ENCODE measurements at regions of chr11 and their contacts with region 1.

Region 1: GRCh38 chr11:72483412-72484186 is 49.3 kb upstream of the CLPB start:
- DNase-seq: peak in 1 of 2 donors; percentile 42
- ATAC-seq: peak in 1 of 3 donors; percentile 42
- H3K4me3 ChIP-seq: no peak overlapping the region
- H3K4me3 Mint-ChIP-seq: no peak overlapping the region
- H3K27ac ChIP-seq: no peak overlapping the region
- H3K27ac Mint-ChIP-seq: peak overlapping the region in 1 of 2 donors; percentile 67
- H3K4me1 ChIP-seq: peaks cover 18% of the 10 kb centered on the region
- H3K4me1 Mint-ChIP-seq: peaks cover 15 to 17% of the 10 kb centered on the region in 2 donors
- H3K27me3 ChIP-seq: no peaks in the 10 kb centered on the region
- H3K27me3 Mint-ChIP-seq: no peaks in the 10 kb centered on the region
- CTCF ChIP-seq: no peak

Region 2: GRCh38 chr11:72553706-72554105 is 70.1 kb after region 1 on chr11:
- intact Hi-C with region 1: loop called (anchors 1 kb)
- DNase-seq: peak in 1 of 2 donors; percentile 67
- ATAC-seq: peak in 2 of 3 donors; percentile 64 to 84
- H3K4me3 ChIP-seq: no peak overlapping the region
- H3K4me3 Mint-ChIP-seq: no peak overlapping the region
- H3K27ac ChIP-seq: no peak overlapping the region
- H3K27ac Mint-ChIP-seq: no peak overlapping the region
- H3K4me1 ChIP-seq: peaks cover 10% of the 10 kb centered on the region
- H3K4me1 Mint-ChIP-seq: peaks cover 15 to 21% of the 10 kb centered on the region in 2 donors
- H3K27me3 ChIP-seq: no peaks in the 10 kb centered on the region
- H3K27me3 Mint-ChIP-seq: peaks cover 4 to 13% of the 10 kb centered on the region in 2 donors
- CTCF ChIP-seq: peak; percentile 28

Region 3: DNA sequence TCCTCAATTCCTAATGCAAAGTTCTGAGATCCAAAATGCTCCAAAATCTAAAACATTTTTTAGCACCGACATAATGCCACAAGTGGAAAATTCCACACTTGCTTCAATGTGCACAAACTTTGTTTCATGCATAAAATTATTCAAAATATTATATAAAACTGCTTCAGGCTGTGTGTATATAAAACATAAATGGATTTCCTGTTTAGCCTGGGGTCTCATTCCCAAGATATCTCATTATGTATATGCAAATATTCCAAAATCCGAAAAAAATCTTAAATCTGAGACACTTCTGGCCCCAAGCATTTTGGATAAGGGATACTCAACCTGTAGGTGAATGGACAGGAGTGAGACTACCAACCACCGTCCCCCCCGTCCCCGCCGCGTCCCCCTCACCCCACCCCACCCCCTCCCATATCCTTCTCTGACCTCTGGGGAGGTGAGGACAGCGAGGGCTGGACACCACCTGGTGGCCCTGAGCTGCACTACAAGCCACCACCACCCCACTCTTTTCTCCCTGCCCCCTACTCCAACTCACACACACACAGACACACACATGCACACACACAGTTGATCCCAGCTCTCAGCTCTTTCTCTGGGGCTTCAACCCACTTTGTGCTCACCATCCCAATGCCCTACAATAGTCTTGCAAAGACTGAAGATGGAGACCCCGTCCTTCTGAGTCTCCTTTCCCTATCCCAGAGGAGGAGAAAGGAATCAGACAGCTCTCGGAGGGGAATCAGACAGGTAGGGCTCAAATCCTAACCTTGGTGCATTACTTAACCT is 89.7 kb after region 1 on chr11:
- intact Hi-C with region 1: loop called (anchors 1 kb)
- DNase-seq: peak; percentile 41 to 64
- ATAC-seq: peak in 2 of 3 donors; percentile 50 to 71
- H3K4me3 ChIP-seq: no peak overlapping the region
- H3K4me3 Mint-ChIP-seq: peak overlapping the region; percentile 17
- H3K27ac ChIP-seq: no peak overlapping the region
- H3K27ac Mint-ChIP-seq: peak overlapping the region in 1 of 2 donors; percentile 42
- H3K4me1 ChIP-seq: peaks cover 35% of the 10 kb centered on the region
- H3K4me1 Mint-ChIP-seq: peaks cover 40 to 51% of the 10 kb centered on the region in 2 donors
- H3K27me3 ChIP-seq: no peaks in the 10 kb centered on the region
- H3K27me3 Mint-ChIP-seq: peaks cover 0 to 2% of the 10 kb centered on the region in 2 donors
- CTCF ChIP-seq: peak; percentile 61

Region 4: DNA sequence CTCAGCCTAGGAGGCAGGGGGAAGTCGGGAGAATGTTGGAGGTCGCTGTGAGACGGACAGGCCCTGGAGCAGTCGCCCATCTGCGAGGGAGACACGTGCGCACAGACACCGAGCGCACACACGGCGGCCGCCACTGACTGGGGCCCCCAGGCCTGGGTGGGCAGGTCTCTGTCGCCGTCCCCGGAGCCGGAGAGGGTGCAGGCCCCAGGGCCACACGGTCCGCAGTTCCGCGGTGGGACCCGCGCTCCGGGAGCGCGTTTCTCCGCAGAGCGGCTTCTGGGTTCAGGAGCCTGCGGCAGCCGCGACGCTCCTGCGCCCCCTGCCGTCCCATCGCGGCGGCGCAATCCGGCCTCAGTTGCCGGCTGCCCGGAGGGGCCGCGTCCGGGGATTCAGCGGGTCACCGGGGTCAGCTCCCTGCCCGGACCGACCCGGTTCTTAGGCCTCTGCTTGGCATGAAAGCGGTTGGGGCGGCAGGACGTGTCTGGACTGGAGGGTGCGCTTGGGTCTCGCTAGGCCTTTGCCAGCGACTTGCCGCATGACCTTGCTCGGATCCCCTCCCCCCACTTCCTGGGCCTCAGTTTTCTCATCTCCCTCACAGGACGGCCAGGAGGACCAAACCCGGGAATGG is 159.4 kb after region 1 on chr11:
- intact Hi-C with region 1: loop called (anchors 1 kb)
- DNase-seq: peak; percentile 73 to 83
- ATAC-seq: peak; percentile 79 to 85 (median 83)
- H3K4me3 ChIP-seq: peak overlapping the region; percentile 51
- H3K4me3 Mint-ChIP-seq: peak overlapping the region; percentile 89
- H3K27ac ChIP-seq: no peak overlapping the region
- H3K27ac Mint-ChIP-seq: no peak overlapping the region
- H3K4me1 ChIP-seq: peaks cover 19% of the 10 kb centered on the region
- H3K4me1 Mint-ChIP-seq: peaks cover 0 to 7% of the 10 kb centered on the region in 2 donors
- H3K27me3 ChIP-seq: peaks cover 32% of the 10 kb centered on the region
- H3K27me3 Mint-ChIP-seq: peaks cover 0 to 8% of the 10 kb centered on the region in 2 donors
- CTCF ChIP-seq: peak; percentile 98